Common myeloid progenitor, CD34-positive (primary cell): ENCODE measurements at regions of chr14 and their contacts with region 1.

Region 1: GRCh38 chr14:74893614-74894091 is 11.9 kb downstream of the DLST start:
- DNase-seq: peak in 2 of 3 donors; percentile 62 to 64
- H3K4me3 ChIP-seq: no peak overlapping the region
- H3K27ac ChIP-seq: peak overlapping the region in 1 of 2 experiments; percentile 16
- H3K4me1 ChIP-seq: peaks cover 0 to 29% (median 26%) of the 10 kb centered on the region in 4 experiments
- H3K27me3 ChIP-seq: no peaks in the 10 kb centered on the region

Region 2: GRCh38 chr14:74867673-74868072 is 26.0 kb before region 1 on chr14:
- CTCF ChIA-PET with region 1: interaction called, 281 read pairs
- POLR2A ChIA-PET with region 1: interaction called, 4 read pairs
- DNase-seq: peak; percentile 48 to 90 (median 87)
- H3K4me3 ChIP-seq: peak overlapping the region in 1 of 7 experiments; percentile 6
- H3K27ac ChIP-seq: peak overlapping the region in 1 of 2 experiments; percentile 17
- H3K4me1 ChIP-seq: peaks cover 19 to 32% (median 27%) of the 10 kb centered on the region in 4 experiments
- H3K27me3 ChIP-seq: no peaks in the 10 kb centered on the region

Region 3: GRCh38 chr14:74881431-74882361 is 12.0 kb before region 1 on chr14 and contains the start of gene DLST:
- CTCF ChIA-PET with region 1: interaction called, 144 read pairs
- POLR2A ChIA-PET with region 1: interaction called, 6 read pairs
- DNase-seq: peak; percentile 83 to 89 (median 88)
- H3K4me3 ChIP-seq: peak within 1 kb of the TSS; percentile 83 to 99 (median 96)
- H3K27ac ChIP-seq: peak within 1 kb of the TSS; percentile 86 to 88
- H3K4me1 ChIP-seq: peaks cover 14 to 41% (median 33%) of the 10 kb centered on the region in 4 experiments
- H3K27me3 ChIP-seq: no peaks in the 10 kb centered on the region

Region 4: GRCh38 chr14:75002392-75003249 is 109.0 kb after region 1 on chr14 and contains the start of gene EIF2B2:
- CTCF ChIA-PET with region 1: no interaction called
- POLR2A ChIA-PET with region 1: no interaction called
- DNase-seq: peak; percentile 97 to 99 (median 98)
- H3K4me3 ChIP-seq: peak within 1 kb of the TSS; percentile 37 to 96 (median 85)
- H3K27ac ChIP-seq: peak within 1 kb of the TSS; percentile 72 to 88
- H3K4me1 ChIP-seq: peaks cover 8 to 23% (median 19%) of the 10 kb centered on the region in 4 experiments
- H3K27me3 ChIP-seq: no peaks in the 10 kb centered on the region

Region 5: DNA sequence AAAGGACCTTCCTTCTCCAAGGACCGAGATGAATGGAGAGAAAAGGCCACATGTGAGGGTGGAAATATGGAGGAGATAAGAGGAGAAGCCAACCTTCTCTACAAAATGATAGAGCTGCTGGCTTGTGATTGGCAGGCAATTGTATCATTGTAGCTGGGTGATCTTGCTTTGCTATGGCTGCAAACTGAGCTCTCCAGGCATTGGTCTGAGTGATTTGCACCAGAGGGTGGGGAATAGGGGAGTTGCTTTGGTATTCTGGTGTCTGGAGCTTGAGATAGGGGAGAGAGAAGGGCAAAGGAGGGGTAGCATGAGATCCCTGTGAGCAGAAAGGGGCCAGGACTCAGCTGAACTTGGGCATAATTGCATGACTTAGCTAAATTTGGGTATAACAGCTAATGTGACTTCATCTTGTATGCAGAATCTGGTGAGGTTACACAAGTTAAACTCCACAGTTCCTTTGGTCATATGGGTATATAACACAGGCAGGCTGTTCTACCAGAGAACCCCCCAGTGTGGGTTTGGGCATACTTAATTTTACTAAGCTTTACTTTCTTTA is 456.9 kb after region 1 on chr14:
- CTCF ChIA-PET with region 1: no interaction called
- POLR2A ChIA-PET with region 1: no interaction called
- DNase-seq: peak; percentile 68 to 90 (median 77)
- H3K4me3 ChIP-seq: no peak overlapping the region
- H3K27ac ChIP-seq: no peak overlapping the region
- H3K4me1 ChIP-seq: peaks cover 0 to 5% (median 0%) of the 10 kb centered on the region in 4 experiments
- H3K27me3 ChIP-seq: no peaks in the 10 kb centered on the region